Activated CD8-positive, alpha-beta T cell treated with anti-CD3 and anti-CD28 coated beads for 36 hours (primary cell): ENCODE measurements at regions of chr19 and their contacts with region 1.

Region 1: GRCh38 chr19:262125-262524 is 29.1 kb downstream of the PLPP2 start:
- DNase-seq: no peak
- ATAC-seq: peak; percentile 85
- H3K4me3 Mint-ChIP-seq: no peak overlapping the region
- H3K27ac Mint-ChIP-seq: peak overlapping the region; percentile 84
- H3K4me1 Mint-ChIP-seq: peaks cover 21% of the 10 kb centered on the region
- H3K27me3 Mint-ChIP-seq: peaks cover 44% of the 10 kb centered on the region
- CTCF ChIP-seq: no peak

Region 2: DNA sequence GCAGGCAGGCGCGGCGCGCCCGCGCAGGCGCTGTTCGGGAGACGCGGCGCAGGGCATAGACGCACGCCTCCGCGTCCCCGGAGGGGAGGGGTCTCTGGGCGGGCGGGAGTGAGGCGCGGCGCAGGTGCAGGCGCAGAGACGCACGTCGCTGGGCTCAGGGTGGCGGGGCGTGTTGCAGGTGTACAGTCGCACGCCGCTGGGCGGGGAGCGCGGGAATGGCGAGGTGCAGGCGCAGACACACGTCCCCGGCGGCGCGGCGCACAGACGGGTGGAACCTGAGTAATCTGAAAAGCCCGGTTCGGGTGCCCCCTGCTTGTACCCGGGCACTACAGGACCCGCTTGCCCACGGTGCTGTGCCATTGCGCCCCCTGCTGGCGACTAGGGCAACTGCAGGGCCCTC is 15.6 kb before region 1 on chr19:
- CTCF ChIA-PET with region 1: interaction called, 13 read pairs
- POLR2A ChIA-PET with region 1: no interaction called
- intact Hi-C with region 1: no loop called
- DNase-seq: no peak
- ATAC-seq: no peak
- H3K4me3 Mint-ChIP-seq: no peak overlapping the region
- H3K27ac Mint-ChIP-seq: no peak overlapping the region
- H3K4me1 Mint-ChIP-seq: no peaks in the 10 kb centered on the region
- H3K27me3 Mint-ChIP-seq: no peaks in the 10 kb centered on the region
- CTCF ChIP-seq: no peak

Region 3: GRCh38 chr19:294946-295686 is 33.0 kb after region 1 on chr19:
- CTCF ChIA-PET with region 1: interaction called, 10 read pairs
- POLR2A ChIA-PET with region 1: no interaction called
- intact Hi-C with region 1: no loop called
- DNase-seq: peak; percentile 60
- ATAC-seq: peak; percentile 80
- H3K4me3 Mint-ChIP-seq: no peak overlapping the region
- H3K27ac Mint-ChIP-seq: no peak overlapping the region
- H3K4me1 Mint-ChIP-seq: peaks cover 11% of the 10 kb centered on the region
- H3K27me3 Mint-ChIP-seq: peaks cover 35% of the 10 kb centered on the region
- CTCF ChIP-seq: peak; percentile 96